Activated CD4-positive, alpha-beta memory T cell treated with anti-CD3 and anti-CD28 coated beads for 36 hours (primary cell): ENCODE measurements at regions of chr5 and their contacts with region 1.

Region 1: DNA sequence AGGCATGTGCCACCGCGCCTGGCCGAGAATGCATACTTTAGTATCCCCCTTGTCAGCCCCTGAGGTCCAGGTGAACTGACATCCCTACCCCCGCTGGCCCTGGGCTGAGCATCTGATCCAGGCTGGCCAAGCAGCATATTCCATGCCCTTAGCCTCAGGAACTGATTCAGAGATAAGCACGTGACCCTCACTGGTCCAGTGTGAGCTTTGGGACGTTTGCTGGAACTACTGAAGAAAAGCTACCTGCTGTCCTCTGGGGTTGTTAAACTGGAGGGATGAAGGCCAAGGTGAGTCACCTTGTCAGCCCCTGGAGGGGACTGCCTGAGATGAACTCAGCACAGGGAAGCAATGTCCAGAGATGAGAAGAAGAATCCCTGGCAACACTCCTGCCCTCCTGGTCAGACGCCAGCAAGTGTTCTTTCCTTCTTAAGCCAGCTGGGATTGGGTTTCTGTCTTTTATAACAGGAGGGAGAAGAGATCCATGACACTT is 59.1 kb upstream of the FBXW11 start:
- DNase-seq: no peak
- H3K4me3 Mint-ChIP-seq: no peak overlapping the region
- H3K27ac Mint-ChIP-seq: no peak overlapping the region
- H3K4me1 Mint-ChIP-seq: peaks cover 50% of the 10 kb centered on the region
- H3K27me3 Mint-ChIP-seq: no peaks in the 10 kb centered on the region

Region 2: DNA sequence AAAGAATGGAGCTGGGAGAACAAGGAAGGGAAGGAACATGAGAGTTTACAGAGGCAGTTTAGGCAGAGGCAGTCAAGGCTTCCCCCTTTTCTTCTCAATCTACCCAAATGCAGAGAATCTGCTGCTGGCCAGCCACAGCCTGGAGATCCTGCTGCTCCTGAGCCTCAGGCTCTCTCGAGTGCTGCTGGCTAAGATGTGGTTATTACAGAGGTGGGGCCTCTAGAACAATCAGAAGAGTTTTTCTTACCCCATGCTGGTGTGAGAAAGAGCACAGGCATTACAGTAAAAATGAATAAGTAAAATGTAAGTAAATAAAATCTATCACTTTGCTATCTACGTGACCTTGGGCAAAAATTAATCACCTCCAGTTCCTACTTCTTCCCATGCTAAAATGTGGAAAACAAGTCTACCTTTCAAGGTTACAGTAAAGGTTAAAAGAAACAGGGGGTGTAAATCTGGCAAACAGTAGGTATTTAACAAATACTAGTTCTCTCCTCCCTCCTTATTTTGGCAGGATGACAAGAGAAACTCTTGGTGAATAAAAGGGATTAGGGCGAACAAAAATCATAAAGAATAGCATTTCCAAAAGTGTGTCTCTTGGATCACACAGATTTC is 90.2 kb before region 1 on chr5:
- CTCF ChIA-PET with region 1: no interaction called
- POLR2A ChIA-PET with region 1: no interaction called
- intact Hi-C with region 1: no loop called
- DNase-seq: no peak
- H3K4me3 Mint-ChIP-seq: no peak overlapping the region
- H3K27ac Mint-ChIP-seq: no peak overlapping the region
- H3K4me1 Mint-ChIP-seq: peaks cover 45% of the 10 kb centered on the region
- H3K27me3 Mint-ChIP-seq: no peaks in the 10 kb centered on the region

Region 3: DNA sequence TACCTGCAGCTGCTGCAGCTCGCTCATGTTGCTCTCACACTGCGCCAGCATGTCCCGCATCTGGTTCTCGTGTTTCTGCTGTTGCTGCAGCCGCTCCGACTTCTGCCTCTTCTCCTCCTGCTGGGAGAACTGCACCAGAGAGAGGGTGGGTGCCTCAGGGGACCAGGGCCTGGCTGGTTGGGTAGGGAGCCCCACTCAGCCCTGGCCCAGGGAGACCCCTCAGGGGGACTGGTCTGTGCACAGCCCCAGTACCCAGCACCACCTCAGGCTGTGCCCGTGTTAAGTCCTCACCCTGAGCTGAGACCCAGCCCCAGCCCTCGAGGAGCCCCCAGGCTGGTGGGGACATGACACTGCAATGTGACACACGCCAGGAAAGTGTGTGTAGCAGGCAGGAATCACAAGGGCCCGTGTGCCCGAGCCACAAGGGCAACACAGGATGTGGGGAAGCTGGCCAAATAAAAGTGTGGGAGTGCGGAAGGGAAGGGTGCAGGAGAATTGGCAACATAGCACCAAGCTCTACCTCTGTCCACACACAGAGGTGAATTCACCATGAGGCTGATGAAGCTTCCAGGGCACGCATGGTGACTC is 10.9 kb before region 1 on chr5:
- CTCF ChIA-PET with region 1: interaction called, 11 read pairs
- POLR2A ChIA-PET with region 1: no interaction called
- intact Hi-C with region 1: no loop called
- DNase-seq: no peak
- H3K4me3 Mint-ChIP-seq: no peak overlapping the region
- H3K27ac Mint-ChIP-seq: no peak overlapping the region
- H3K4me1 Mint-ChIP-seq: peaks cover 2% of the 10 kb centered on the region
- H3K27me3 Mint-ChIP-seq: no peaks in the 10 kb centered on the region

Region 4: DNA sequence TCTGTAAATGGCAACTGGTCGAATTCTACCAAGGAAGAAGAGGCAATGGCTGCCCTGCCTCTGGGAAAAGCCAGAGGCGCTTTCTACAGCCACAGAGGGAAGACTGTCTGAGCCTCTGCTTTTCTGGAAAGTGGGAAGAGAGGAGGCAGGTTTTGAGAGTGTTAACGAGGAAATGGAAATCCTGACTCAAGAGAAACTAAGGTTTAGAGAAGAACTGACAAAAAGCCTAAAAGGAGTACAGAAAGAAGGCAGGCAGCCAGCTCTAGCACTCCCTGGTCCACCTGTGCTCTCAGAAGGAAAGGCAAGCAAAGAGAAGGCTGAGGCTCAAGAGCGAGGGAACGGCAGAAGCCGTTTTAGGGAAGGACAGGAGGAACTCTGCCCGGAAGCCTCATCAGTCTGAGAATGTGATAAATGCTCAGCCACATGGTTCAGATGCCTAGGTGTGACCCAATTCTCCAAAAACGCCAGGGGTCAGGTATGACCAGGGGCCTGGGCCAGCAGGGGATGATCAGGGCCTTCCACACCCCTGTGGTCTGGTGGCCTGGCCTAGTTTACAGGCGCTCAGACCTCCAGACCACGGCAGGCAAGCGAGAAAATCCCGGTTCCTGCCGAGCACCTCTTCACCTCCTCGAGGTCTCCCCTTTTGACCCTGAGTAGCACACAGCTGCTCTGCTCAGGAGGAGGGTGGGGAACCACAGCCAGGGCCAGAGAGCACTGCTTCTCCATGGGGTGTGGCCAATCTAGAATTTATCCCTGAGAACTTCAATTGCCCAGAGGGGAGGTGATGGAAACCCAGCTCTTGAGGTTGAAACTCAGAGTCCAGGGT is 20.9 kb after region 1 on chr5:
- CTCF ChIA-PET with region 1: no interaction called
- POLR2A ChIA-PET with region 1: no interaction called
- intact Hi-C with region 1: no loop called
- DNase-seq: no peak
- H3K4me3 Mint-ChIP-seq: no peak overlapping the region
- H3K27ac Mint-ChIP-seq: peak overlapping the region; percentile 19
- H3K4me1 Mint-ChIP-seq: peaks cover 12% of the 10 kb centered on the region
- H3K27me3 Mint-ChIP-seq: no peaks in the 10 kb centered on the region

Region 5: DNA sequence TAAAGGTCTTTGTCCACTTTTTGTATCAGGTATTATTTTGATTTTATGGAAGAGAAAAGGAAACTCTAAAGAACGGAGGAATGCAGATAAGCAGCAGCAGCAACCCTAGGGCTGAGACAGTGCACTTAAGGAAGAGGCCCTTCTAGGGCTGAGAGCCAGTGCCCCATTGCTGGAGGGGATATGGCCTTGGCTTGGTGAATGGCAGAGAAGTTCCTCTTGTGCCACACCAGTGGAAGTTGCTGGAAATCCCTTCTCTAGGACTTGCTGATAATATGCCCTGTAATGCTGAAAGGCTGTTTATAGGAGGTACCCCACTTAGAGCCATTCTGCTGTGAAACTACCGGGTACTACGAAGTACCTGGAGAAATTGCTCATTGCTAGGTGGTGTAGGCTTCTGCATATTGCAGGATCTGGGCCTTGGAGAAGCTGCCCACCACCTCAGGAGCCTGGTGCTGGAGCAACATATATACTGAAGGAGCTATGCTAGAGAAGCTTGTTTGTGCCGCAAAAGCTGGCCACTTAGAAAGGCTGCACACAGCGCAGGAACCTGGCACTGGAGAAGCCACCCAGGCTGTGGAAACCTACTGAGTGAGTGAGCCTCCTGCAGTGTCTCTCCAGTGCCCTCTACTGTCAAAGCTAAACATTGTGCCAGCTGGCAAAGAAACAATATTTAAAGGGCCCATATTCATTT is 227.7 kb after region 1 on chr5:
- CTCF ChIA-PET with region 1: interaction called, 11 read pairs
- POLR2A ChIA-PET with region 1: interaction called, 3 read pairs
- intact Hi-C with region 1: no loop called
- DNase-seq: peak; percentile 72
- H3K4me3 Mint-ChIP-seq: no peak overlapping the region
- H3K27ac Mint-ChIP-seq: no peak overlapping the region
- H3K4me1 Mint-ChIP-seq: no peaks in the 10 kb centered on the region
- H3K27me3 Mint-ChIP-seq: peaks cover 4% of the 10 kb centered on the region